Esophagus squamous epithelium (tissue), 5 donors: ENCODE measurements at regions of chr9 and their contacts with region 1.

Region 1: GRCh38 chr9:134656334-134657006 is 14.9 kb downstream of the COL5A1 start:
- DNase-seq: no peak
- H3K4me3 ChIP-seq: no peak overlapping the region
- H3K27ac ChIP-seq: no peak overlapping the region
- H3K4me1 ChIP-seq: peaks cover 0 to 51% (median 2%) of the 10 kb centered on the region in 3 donors
- H3K27me3 ChIP-seq: no peaks in the 10 kb centered on the region
- CTCF ChIP-seq: no peak
- POLR2A ChIP-seq: no peak

Region 2: DNA sequence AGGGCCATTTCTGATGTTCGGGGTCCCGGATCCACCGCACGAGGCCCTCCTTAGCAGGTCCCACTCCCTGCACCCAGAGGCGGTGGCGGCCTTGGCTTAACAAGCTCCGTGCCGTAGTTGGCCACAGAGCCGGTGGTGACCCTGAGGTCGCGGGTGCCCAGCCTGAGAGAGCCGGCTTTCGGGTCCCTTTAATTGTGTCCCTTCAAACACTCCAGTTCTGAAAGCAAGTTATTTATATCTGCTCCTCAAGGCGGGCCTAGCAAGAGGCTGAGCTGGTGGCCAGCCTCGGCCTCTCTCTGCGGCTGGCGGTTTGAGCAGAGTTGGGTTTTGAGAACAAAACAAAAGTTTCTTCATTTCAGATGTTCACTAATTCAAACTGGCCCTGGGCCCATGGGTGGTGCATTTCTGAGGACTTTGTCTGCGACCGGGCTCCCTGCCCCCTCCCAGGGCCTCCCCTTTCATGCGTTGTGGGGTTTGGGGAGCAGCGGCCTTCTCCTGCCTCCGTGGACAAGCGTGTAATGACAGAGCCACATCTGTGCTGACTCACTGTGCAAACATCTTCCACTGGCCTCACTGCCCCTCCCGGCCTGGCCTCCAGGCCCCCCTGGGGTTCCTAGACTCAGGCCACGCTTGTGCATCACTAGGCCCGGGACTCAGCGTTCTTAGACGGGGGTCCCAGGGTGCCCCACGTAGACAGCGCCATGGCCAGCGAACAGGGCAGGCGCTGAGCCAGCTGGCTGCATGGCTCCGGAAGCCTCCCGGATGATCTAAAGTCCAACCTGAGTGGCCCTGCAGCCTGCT is 64.3 kb before region 1 on chr9:
- intact Hi-C with region 1: loop called (anchors 10 kb)
- DNase-seq: no peak
- H3K4me3 ChIP-seq: no peak overlapping the region
- H3K27ac ChIP-seq: peak overlapping the region in 3 of 4 donors; percentile 50 to 78 (median 69)
- H3K4me1 ChIP-seq: peaks cover 0 to 20% (median 0%) of the 10 kb centered on the region in 3 donors
- H3K27me3 ChIP-seq: peaks cover 0 to 29% (median 0%) of the 10 kb centered on the region in 4 donors
- CTCF ChIP-seq: no peak
- POLR2A ChIP-seq: no peak